H1 (cell line): ENCODE measurements at regions of chr12 and their contacts with region 1.

Region 1: DNA sequence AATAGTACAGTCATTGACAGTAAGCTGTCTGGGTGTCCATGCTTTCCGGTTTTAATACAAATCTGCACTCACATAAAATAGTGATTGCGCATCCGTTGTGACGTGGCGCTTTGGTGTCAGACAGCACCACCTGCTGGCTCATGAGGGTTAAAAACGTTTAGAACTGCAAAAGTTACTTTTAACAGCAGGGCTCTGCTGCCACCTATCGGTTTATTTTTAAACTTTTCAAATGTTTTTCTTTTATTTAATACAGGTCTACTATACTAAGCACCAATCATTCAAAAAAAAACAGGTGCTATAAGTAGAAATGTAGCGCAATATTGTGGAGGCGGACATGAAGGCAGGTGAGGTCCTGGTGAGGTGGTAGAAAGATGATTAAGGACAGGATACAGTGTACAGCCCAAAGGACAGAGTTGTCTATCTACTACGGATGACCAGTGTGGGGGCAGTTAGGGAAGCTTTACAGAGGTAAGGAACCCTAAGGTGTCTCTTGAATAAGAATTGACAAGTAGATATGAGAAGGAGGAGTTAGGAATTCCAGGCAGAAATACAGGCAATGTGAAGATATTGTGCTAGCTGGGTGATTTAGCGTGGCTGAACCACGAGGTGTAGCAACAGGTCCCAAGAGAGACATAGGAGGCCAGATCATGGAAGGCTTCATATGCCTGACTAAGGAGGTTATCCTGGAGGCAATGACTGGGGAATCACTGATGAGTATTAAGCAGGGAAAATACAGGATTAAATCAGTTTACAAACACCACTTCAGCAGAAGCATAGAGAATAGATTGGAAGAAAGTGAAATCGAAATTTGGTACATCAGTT is 91.5 kb upstream of the PRB2 start:
- DNase-seq: peak in 1 of 2 experiments; percentile 74
- H3K4me3 ChIP-seq: no peak overlapping the region
- H3K27ac ChIP-seq: no peak overlapping the region
- H3K4me1 ChIP-seq: peaks cover 0 to 3% (median 0%) of the 10 kb centered on the region in 4 experiments; a peak in 1 of 7 replicates
- H3K27me3 ChIP-seq: no peaks in the 10 kb centered on the region
- CTCF ChIP-seq: peak; percentile 65 to 99 (median 92)
- EP300 ChIP-seq: no peak
- POLR2A ChIP-seq: no peak
- RAD21 ChIP-seq: peak; percentile 100

Region 2: GRCh38 chr12:10771132-10771733 is 715.6 kb before region 1 on chr12:
- CTCF ChIA-PET with region 1: interaction called, 59 read pairs
- POLR2A ChIA-PET with region 1: no interaction called
- DNase-seq: no peak
- H3K4me3 ChIP-seq: no peak overlapping the region
- H3K27ac ChIP-seq: no peak overlapping the region
- H3K4me1 ChIP-seq: no peaks in the 10 kb centered on the region
- H3K27me3 ChIP-seq: no peaks in the 10 kb centered on the region
- CTCF ChIP-seq: peak in 2 of 3 experiments; percentile 28 to 47; a peak in 2 of 4 replicates
- EP300 ChIP-seq: no peak
- POLR2A ChIP-seq: no peak
- RAD21 ChIP-seq: peak; percentile 70 to 86

Region 3: GRCh38 chr12:11202811-11203210 is 284.0 kb before region 1 on chr12:
- CTCF ChIA-PET with region 1: interaction called, 17 read pairs
- POLR2A ChIA-PET with region 1: no interaction called
- DNase-seq: no peak
- H3K4me3 ChIP-seq: no peak overlapping the region
- H3K27ac ChIP-seq: no peak overlapping the region
- H3K4me1 ChIP-seq: no peaks in the 10 kb centered on the region; a peak in 1 of 7 replicates
- H3K27me3 ChIP-seq: no peaks in the 10 kb centered on the region
- CTCF ChIP-seq: no peak
- EP300 ChIP-seq: no peak
- POLR2A ChIP-seq: no peak
- RAD21 ChIP-seq: no peak

Region 4: DNA sequence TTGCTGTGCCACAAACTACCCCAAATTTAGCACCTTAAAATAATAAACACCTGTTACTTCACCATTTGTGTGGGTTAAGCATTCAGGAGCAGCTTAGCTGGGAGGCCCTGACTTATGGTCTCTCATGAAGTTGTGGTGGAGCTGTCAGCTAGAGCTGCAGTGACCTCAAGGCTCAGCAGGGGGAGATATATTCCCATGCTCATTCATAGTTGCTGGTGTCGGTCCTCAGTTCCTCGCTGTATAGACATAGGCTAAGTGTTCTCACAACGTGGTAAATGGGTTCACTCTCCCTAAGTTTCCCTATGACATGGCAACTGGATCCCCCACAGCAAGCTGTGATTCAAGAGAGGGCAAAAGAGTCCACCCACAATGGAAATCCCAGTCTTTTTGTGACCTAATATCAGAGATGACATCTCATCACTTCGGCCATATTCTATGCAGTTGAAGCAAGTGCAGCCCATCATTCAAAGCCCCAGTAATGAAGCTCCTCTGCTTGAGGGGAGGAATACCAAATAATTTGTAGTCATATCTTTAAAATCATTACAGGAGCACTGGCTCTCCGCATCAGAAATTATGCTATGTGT is 258.4 kb before region 1 on chr12:
- CTCF ChIA-PET with region 1: interaction called, 230 read pairs
- POLR2A ChIA-PET with region 1: no interaction called
- DNase-seq: peak; percentile 56 to 75
- H3K4me3 ChIP-seq: no peak overlapping the region
- H3K27ac ChIP-seq: no peak overlapping the region
- H3K4me1 ChIP-seq: no peaks in the 10 kb centered on the region
- H3K27me3 ChIP-seq: no peaks in the 10 kb centered on the region
- CTCF ChIP-seq: peak; percentile 73 to 95 (median 94)
- EP300 ChIP-seq: no peak
- POLR2A ChIP-seq: no peak
- RAD21 ChIP-seq: peak; percentile 95 to 97

Region 5: GRCh38 chr12:11238275-11238674 is 248.6 kb before region 1 on chr12:
- CTCF ChIA-PET with region 1: interaction called, 230 read pairs
- POLR2A ChIA-PET with region 1: interaction called, 3 read pairs
- DNase-seq: no peak
- H3K4me3 ChIP-seq: no peak overlapping the region
- H3K27ac ChIP-seq: no peak overlapping the region
- H3K4me1 ChIP-seq: no peaks in the 10 kb centered on the region
- H3K27me3 ChIP-seq: no peaks in the 10 kb centered on the region
- CTCF ChIP-seq: no peak
- EP300 ChIP-seq: no peak
- POLR2A ChIP-seq: no peak
- RAD21 ChIP-seq: no peak

Region 6: GRCh38 chr12:11246489-11246888 is 240.3 kb before region 1 on chr12:
- CTCF ChIA-PET with region 1: interaction called, 12 read pairs
- POLR2A ChIA-PET with region 1: interaction called, 3 read pairs
- DNase-seq: no peak
- H3K4me3 ChIP-seq: no peak overlapping the region
- H3K27ac ChIP-seq: no peak overlapping the region
- H3K4me1 ChIP-seq: no peaks in the 10 kb centered on the region
- H3K27me3 ChIP-seq: no peaks in the 10 kb centered on the region
- CTCF ChIP-seq: no peak
- EP300 ChIP-seq: no peak
- POLR2A ChIP-seq: no peak
- RAD21 ChIP-seq: no peak

Region 7: DNA sequence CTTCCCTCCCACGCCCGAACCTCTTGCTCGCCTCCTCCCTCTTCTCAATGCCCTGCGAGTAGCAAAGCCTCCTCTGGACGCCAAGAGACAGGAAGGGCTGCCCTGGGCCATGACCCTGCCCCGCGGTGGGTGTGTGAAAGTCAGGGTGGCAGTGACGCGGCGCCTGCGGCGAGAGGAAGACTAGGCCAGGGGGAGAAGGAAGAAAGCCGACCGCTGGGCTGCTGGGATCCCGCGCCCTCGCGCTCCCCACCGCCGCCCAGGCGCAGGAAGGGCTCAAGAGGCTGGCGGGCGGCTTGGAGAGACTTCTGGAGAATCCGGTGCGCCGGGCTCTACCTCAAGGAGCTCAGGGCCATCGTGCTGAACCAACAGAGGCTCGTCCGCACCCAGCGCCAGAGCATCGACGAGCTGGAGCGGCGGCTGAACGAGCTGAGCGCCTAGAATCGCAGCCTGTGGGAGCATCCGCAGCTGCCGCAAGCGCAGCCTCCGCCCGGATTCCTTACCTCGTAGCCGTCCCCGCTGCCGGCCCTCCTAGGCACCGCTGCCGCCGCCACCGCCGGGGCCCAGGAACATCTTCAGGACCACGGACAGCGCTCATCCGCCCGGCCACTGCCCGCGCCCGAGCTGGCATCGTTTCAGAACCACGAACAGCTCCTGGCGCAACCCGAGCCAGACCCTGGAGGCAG is 13.5 kb after region 1 on chr12:
- CTCF ChIA-PET with region 1: interaction called, 21 read pairs
- POLR2A ChIA-PET with region 1: no interaction called
- DNase-seq: peak; percentile 59 to 99
- H3K4me3 ChIP-seq: peak overlapping the region; percentile 4 to 54 (median 42); a peak in 7 of 8 replicates
- H3K27ac ChIP-seq: no peak overlapping the region
- H3K4me1 ChIP-seq: peaks cover 0 to 6% (median 2%) of the 10 kb centered on the region in 4 experiments; a peak in 4 of 7 replicates
- H3K27me3 ChIP-seq: peaks cover 0 to 11% (median 10%) of the 10 kb centered on the region in 4 experiments; a peak in 5 of 7 replicates
- CTCF ChIP-seq: no peak
- EP300 ChIP-seq: peak in 1 of 2 experiments; percentile 73; a peak in 1 of 3 replicates
- POLR2A ChIP-seq: no peak
- RAD21 ChIP-seq: peak in 1 of 2 experiments; percentile 16; a peak in 1 of 4 replicates